ENCODE measurements at regions of chr17 and their contacts with region 1.

Region 1: DNA sequence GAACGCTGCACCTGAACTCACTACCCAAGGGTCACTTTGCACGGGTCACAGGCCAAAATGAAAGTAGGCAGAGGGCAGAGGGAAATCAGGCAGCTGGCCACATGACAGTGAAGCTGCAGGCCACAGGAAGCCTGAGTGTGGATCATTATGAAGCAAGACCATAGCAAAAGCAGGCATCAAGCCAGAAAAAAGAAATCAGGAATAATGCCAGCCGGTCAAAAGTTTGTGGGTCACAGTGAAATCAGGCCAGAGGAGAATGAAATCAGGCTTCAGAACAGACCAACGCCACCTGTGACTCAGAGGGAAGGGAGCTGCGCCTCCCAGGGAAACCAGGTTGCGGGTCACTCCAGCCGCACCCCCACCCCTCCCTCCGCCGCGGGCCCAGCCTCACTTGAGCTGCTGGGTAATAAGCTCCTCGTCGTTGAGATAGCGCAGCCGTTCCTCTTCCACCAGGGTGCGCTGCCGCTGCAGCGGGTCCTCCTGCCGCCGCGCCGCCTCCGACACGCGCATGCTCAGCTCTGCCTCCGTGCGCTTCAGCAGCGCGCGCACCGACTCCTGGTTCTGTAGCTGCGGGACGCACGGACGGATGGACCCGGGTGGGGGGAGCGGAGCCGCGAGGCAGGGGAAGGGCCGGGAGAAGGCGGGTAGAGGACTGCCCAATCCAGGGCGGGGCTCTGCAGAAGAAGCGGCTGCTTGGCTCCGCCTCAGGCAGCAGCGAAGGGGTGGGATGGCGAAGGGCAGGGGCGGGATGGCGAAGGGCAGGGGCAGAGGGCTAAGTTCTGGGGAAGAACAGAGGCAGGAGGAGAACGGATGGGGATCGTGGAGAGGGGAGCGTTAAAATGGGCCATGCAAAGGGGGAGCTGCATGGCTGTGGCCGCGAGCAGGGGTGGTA is 47.7 kb downstream of the SRCIN1 start:
- DNase-seq: peak; percentile 86
- H3K4me3 Mint-ChIP-seq: peak overlapping the region; percentile 84
- H3K27ac Mint-ChIP-seq: no peak overlapping the region
- H3K4me1 Mint-ChIP-seq: peaks cover 20% of the 10 kb centered on the region
- H3K27me3 Mint-ChIP-seq: peaks cover 51% of the 10 kb centered on the region

Region 2: GRCh38 chr17:38584350-38584925 is 26.4 kb after region 1 on chr17:
- intact Hi-C with region 1: loop called (anchors 1 kb)
- DNase-seq: peak; percentile 42
- H3K4me3 Mint-ChIP-seq: no peak overlapping the region
- H3K27ac Mint-ChIP-seq: no peak overlapping the region
- H3K4me1 Mint-ChIP-seq: peaks cover 6% of the 10 kb centered on the region
- H3K27me3 Mint-ChIP-seq: peaks cover 74% of the 10 kb centered on the region

Region 3: DNA sequence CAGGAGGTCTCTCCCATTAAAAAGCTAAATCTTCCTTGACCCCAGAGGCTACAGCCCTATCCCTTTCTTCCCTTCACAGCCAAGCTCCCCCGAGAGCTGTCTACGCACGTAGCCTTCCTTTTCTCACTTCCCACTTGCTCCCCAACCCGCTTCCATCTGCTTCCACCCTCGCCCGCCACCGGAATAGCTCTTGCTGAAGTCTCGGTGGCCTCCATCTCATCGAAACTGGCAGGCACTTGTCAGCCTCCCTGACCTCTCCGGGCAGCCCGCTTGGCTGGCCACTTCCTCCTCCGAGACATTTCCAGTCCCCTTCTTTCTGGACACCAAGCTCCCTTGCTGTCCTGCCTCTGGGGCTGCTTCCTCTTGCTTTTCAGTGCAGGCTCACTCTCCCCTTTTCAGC is 127.4 kb after region 1 on chr17:
- intact Hi-C with region 1: no loop called
- DNase-seq: no peak
- H3K4me3 Mint-ChIP-seq: no peak overlapping the region
- H3K27ac Mint-ChIP-seq: no peak overlapping the region
- H3K4me1 Mint-ChIP-seq: peaks cover 3% of the 10 kb centered on the region
- H3K27me3 Mint-ChIP-seq: peaks cover 5% of the 10 kb centered on the region